Activated T-helper 1 cell treated with anti-CD3 and anti-CD28 coated beads, Interleukin-12 subunit alpha, Interleukin-12 subunit beta, Interleukin-2, Interleukin-4 antibody, amounts not matched to agents 30 ng/mL and 10 ng/mL and 1 ng/mL, durations not matched to agents 14 hours and 24 hours and 36 hours (primary cell): ENCODE measurements at regions of chr2 and their contacts with region 1.

Region 1: DNA sequence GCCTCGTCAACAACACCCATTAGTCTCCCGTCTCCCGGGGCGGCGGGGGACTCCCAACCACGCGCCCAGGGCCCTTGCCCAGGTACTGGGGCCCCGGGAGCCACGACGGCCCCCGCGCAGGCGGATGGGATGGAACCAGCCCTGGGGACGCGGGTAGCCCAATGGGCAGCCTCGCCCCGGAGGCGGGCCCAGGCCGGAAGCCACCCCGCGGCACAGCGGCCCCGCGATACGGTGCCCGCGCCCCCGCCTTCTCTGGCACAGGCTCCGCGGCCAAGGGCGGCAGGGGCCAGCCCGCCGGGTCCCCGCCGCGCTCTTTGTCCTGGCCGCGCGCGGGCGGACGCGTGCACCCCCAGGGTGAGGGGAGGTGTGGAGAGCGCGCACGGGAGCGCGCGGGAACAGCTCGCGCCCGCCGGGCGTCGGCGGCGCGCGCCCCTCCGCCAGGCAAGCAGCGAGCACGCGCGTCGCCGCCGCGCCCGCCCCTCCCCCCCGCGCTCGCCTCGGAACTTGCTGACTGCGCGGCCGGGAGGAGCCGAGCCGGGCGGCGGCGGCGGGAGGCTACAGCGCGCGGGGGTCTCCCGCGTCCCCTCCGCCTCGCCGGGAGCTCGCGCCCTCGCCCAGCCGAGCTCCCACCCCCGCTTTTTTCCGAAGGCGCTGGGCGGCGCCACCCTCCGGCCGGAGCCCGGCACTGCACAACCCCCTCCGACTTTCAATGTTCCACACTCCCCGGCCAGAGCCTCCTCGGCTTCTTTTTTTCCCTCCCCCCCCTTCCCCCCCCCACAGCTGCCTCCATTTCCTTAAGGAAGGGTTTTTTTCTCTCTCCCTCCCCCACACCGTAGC is at the start of gene UBE2E3:
- DNase-seq: peak; percentile 72
- H3K4me3 Mint-ChIP-seq: peak within 1 kb of the TSS; percentile 98
- H3K27ac Mint-ChIP-seq: peak within 1 kb of the TSS; percentile 95
- H3K4me1 Mint-ChIP-seq: peaks cover 45% of the 10 kb centered on the region
- H3K27me3 Mint-ChIP-seq: peaks cover 30% of the 10 kb centered on the region
- total RNA-seq, gene UBE2E3: 49.8 and 57.4 TPM in 2 replicates

Region 2: DNA sequence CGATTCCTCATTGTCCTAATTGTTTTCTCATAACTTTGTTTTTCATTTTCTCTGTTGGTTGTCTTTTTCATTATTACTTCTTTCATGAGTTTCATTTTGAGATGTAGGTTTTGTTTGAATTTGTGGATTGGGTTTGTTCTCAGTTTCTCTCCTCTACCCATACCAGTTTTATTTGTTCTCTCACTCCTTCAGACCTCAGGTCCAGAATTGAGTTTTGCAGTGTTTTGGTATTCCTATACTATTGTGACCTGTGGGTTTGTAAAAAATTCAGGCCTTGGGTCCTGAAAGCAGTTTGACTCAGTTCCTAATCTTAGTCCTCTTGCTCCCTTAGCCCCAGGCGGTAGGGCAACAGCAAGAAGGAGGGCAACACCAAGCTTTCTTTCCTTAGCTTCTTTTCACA is 28.2 kb before region 1 on chr2:
- intact Hi-C with region 1: no loop called
- DNase-seq: no peak
- H3K4me3 Mint-ChIP-seq: no peak overlapping the region
- H3K27ac Mint-ChIP-seq: no peak overlapping the region
- H3K4me1 Mint-ChIP-seq: no peaks in the 10 kb centered on the region
- H3K27me3 Mint-ChIP-seq: peaks cover 11% of the 10 kb centered on the region

Region 3: GRCh38 chr2:180992994-180993393 is 12.7 kb after region 1 on chr2:
- intact Hi-C with region 1: loop called (anchors 1 kb)
- DNase-seq: no peak
- H3K4me3 Mint-ChIP-seq: no peak overlapping the region
- H3K27ac Mint-ChIP-seq: no peak overlapping the region
- H3K4me1 Mint-ChIP-seq: peaks cover 18% of the 10 kb centered on the region
- H3K27me3 Mint-ChIP-seq: no peaks in the 10 kb centered on the region

Region 4: GRCh38 chr2:181058378-181059269 is 78.3 kb after region 1 on chr2:
- intact Hi-C with region 1: loop called (anchors 2 kb)
- DNase-seq: no peak
- H3K4me3 Mint-ChIP-seq: no peak overlapping the region
- H3K27ac Mint-ChIP-seq: no peak overlapping the region
- H3K4me1 Mint-ChIP-seq: peaks cover 13% of the 10 kb centered on the region
- H3K27me3 Mint-ChIP-seq: no peaks in the 10 kb centered on the region

Region 5: DNA sequence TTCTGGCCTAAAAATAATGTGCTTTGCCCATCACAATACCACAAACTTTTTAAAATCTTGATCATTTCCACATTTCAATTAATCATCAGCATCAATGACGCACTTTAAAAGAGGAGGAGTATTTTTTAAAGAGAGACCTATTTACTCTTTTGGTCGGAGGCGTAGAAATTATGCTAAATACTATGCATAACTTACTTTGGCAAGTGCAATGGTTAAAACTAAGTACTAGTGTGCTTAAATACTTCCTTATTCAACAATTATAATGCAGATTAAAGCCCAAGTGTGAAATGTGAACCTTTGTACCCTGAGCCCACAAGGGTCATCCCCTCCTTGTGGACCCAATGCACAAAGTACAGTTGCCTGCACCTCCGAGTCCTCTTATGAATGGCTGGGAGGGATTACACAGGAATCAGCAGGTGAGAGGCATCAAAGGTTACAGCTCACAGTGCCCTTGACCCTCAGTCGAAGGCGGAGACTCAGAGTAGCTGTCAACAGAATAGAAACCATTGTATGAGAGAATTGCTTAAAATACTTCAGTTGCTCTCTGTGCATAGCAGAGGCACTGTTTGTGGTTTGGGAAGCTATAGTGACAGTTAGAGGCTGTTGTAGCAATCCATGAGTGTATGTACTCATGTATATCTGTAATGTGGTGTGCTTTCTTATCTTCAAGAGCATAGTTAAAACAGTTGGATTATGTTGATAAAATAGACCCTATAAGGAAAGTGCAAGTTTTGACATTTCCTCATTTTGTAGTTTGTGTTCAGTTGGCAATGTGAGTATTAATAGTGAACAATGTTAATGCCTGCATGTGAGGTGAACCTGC is 325.2 kb after region 1 on chr2:
- intact Hi-C with region 1: loop called (anchors 2 kb)
- DNase-seq: peak; percentile 62
- H3K4me3 Mint-ChIP-seq: peak overlapping the region; percentile 74
- H3K27ac Mint-ChIP-seq: peak overlapping the region; percentile 96
- H3K4me1 Mint-ChIP-seq: peaks cover 84% of the 10 kb centered on the region
- H3K27me3 Mint-ChIP-seq: no peaks in the 10 kb centered on the region

Region 6: DNA sequence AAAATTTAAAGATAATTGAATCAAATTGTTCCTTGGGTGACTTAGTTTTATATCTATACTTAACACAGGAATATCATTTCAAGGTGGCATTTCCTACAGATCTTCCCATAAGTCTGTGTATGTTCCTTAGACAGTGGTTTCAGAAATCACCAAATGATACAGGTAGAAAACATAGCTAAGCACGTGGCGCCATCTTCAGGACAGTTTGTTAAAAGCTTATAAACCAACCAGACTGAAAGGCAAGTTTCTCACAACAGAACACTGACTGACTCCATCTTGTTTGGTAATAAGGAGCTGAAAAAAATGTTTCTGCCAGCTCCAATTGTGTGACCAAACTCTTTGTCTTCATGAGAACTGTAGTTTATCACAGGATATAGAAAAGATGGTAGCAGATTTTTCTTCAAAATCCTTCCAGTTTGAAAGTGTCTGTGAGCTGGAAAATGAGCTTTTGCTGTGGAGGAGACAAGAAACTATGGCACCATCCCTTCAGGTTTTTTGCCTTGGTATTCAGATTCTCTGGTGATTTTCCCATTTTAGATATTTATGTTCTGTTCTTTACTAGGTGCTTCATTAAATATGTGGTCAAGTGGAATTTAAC is 734.8 kb after region 1 on chr2:
- intact Hi-C with region 1: loop called (anchors 5 kb)
- DNase-seq: peak; percentile 45
- H3K4me3 Mint-ChIP-seq: no peak overlapping the region
- H3K27ac Mint-ChIP-seq: no peak overlapping the region
- H3K4me1 Mint-ChIP-seq: no peaks in the 10 kb centered on the region
- H3K27me3 Mint-ChIP-seq: peaks cover 5% of the 10 kb centered on the region

Region 7: GRCh38 chr2:181891966-181892798 is 911.9 kb after region 1 on chr2:
- intact Hi-C with region 1: loop called (anchors 2 kb)
- DNase-seq: peak; percentile 57
- H3K4me3 Mint-ChIP-seq: peak overlapping the region; percentile 93
- H3K27ac Mint-ChIP-seq: peak overlapping the region; percentile 87
- H3K4me1 Mint-ChIP-seq: peaks cover 42% of the 10 kb centered on the region
- H3K27me3 Mint-ChIP-seq: peaks cover 19% of the 10 kb centered on the region

Region 8: DNA sequence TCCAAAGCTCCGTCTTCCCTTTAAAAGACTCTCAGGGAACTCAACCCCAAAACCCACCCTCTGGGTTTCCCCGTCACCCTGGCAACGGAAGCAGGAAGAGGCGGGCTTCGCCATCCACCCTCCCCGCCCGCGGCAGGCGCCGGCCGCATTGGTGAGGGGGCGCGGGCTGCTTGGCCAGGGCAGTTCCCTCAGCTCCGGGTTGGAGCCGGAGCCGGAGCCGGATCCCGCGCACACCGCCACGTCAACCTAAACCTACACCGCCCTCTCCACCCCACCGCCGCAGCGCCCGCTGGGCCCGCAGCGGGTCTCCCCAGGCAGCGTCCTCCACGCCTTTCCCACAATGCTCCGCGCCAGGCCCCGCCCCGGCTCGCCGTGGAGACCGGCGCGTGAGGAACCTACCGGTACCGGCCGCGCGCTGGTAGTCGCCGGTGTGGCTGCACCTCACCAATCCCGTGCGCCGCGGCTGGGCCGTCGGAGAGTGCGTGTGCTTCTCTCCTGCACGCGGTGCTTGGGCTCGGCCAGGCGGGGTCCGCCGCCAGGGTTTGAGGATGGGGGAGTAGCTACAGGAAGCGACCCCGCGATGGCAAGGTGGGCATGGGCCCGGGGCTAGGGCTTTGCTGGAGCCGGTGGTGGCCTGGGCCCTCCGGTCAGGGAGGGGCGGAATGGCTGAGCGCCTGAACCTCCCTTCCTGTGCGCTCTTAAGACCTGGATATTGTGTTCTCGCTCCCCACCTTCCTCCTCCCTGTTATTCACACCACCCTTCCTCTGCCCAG is 1735.8 kb after region 1 on chr2 and contains the start of gene DNAJC10:
- intact Hi-C with region 1: loop called (anchors 2 kb)
- DNase-seq: peak; percentile 87
- H3K4me3 Mint-ChIP-seq: no peak within 1 kb of the TSS
- H3K27ac Mint-ChIP-seq: no peak within 1 kb of the TSS
- H3K4me1 Mint-ChIP-seq: no peaks in the 10 kb centered on the region
- H3K27me3 Mint-ChIP-seq: peaks cover 5% of the 10 kb centered on the region
- total RNA-seq, gene DNAJC10: 68.7 and 69.5 TPM in 2 replicates